Activated CD8-positive, alpha-beta T cell treated with anti-CD3 and anti-CD28 coated beads, Interleukin-2, amount 10 ng/mL, durations not matched to agents 7 days and 5 days (primary cell): ENCODE measurements at regions of chr12 and their contacts with region 1.

Region 1: GRCh38 chr12:110301065-110301806 is 20.2 kb downstream of the ATP2A2 start:
- DNase-seq: no peak
- ATAC-seq: no peak
- H3K4me3 Mint-ChIP-seq: no peak overlapping the region
- H3K27ac Mint-ChIP-seq: peak overlapping the region; percentile 54
- H3K4me1 Mint-ChIP-seq: peaks cover 29% of the 10 kb centered on the region
- H3K27me3 Mint-ChIP-seq: no peaks in the 10 kb centered on the region

Region 2: DNA sequence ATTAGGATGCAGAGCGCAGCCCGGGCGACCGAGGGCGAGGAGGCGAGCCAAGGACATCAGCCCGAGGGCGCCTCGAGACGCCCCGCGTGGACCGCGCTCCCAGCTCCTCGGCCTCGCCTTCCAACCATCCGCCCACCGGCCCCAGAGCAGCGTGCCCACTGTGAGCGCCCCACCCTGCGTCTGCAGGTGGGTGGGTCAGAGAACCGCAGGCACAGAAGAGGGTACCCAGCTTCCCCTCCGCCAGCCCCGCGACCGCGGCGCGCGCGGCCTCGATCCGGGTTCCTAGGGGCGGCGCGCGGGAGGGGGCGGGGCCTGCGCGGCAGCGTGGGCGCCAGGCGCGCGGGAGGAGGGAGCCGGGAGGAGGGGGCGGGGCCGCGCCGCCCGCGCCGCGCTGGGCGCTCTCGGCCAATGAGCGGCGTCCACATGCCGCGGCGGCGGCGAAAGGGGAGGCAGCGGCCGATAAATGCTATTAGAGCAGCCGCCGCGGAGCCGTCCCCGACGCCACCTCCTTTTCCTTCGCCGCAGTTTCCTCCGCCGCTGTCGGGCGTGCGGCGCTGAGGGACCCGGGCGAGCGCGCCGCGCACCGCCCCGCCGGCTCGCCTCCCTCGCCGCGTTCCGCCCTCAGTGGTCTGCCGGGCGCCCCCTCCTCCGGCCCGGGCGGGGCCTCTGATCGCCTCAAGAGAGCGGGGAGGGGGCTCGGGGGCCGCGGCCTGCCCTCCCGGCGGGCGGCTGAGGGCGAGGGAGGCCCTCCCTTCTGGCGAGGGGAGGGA is 20.3 kb before region 1 on chr12 and contains the start of gene ATP2A2:
- CTCF ChIA-PET with region 1: no interaction called
- POLR2A ChIA-PET with region 1: interaction called, 13 read pairs
- DNase-seq: peak; percentile 91
- ATAC-seq: peak; percentile 87
- H3K4me3 Mint-ChIP-seq: peak within 1 kb of the TSS; percentile 93
- H3K27ac Mint-ChIP-seq: peak within 1 kb of the TSS; percentile 90
- H3K4me1 Mint-ChIP-seq: peaks cover 39% of the 10 kb centered on the region
- H3K27me3 Mint-ChIP-seq: peaks cover 15% of the 10 kb centered on the region
- total RNA-seq, gene ATP2A2: 130 to 132 TPM